CD8-positive, alpha-beta T cell (primary cell): ENCODE measurements at regions of chr2 and their contacts with region 1.

Region 1: GRCh38 chr2:196225213-196225612 is 53.8 kb upstream of the STK17B start:
- DNase-seq: no peak
- ATAC-seq: no peak
- H3K4me3 ChIP-seq: no peak overlapping the region
- H3K4me3 Mint-ChIP-seq: peak overlapping the region; percentile 8
- H3K27ac ChIP-seq: no peak overlapping the region
- H3K27ac Mint-ChIP-seq: peak overlapping the region; percentile 25
- H3K4me1 ChIP-seq: peaks cover 61% of the 10 kb centered on the region
- H3K4me1 Mint-ChIP-seq: peaks cover 78% of the 10 kb centered on the region
- H3K27me3 ChIP-seq: no peaks in the 10 kb centered on the region
- H3K27me3 Mint-ChIP-seq: no peaks in the 10 kb centered on the region
- CTCF ChIP-seq: no peak

Region 2: DNA sequence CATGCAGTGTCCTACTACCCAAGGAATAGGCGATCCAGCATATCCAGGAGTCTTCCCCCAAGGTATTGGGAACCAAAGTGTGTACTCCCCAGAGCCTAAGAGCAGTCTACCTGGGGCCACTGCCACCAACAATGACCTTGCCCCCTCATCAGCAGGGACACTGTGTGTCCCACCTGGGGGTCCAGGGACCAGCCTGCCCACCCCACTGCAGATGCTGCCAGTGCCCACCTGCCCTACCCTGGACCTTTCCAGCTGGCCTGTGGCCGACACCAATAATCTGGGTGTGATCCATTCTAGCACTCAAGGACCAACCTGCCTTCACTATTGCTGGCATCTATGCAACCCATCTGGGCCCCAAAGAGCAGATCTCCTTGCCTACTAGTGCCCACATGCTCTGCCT is 188.8 kb before region 1 on chr2:
- CTCF ChIA-PET with region 1: no interaction called
- POLR2A ChIA-PET with region 1: no interaction called
- intact Hi-C with region 1: no loop called
- DNase-seq: no peak
- ATAC-seq: no peak
- H3K4me3 ChIP-seq: no peak overlapping the region
- H3K4me3 Mint-ChIP-seq: no peak overlapping the region
- H3K27ac ChIP-seq: no peak overlapping the region
- H3K27ac Mint-ChIP-seq: no peak overlapping the region
- H3K4me1 ChIP-seq: no peaks in the 10 kb centered on the region
- H3K4me1 Mint-ChIP-seq: no peaks in the 10 kb centered on the region
- H3K27me3 ChIP-seq: no peaks in the 10 kb centered on the region
- H3K27me3 Mint-ChIP-seq: peaks cover 6% of the 10 kb centered on the region
- CTCF ChIP-seq: no peak

Region 3: GRCh38 chr2:196131384-196131937 is 93.8 kb before region 1 on chr2:
- CTCF ChIA-PET with region 1: interaction called, 14 read pairs
- POLR2A ChIA-PET with region 1: interaction called, 6 read pairs
- intact Hi-C with region 1: loop called in 1 of 2 experiments (anchors 1 kb)
- DNase-seq: peak in 8 of 9 experiments; percentile 43 to 78 (median 64)
- ATAC-seq: peak; percentile 24
- H3K4me3 ChIP-seq: no peak overlapping the region
- H3K4me3 Mint-ChIP-seq: no peak overlapping the region
- H3K27ac ChIP-seq: peak overlapping the region in 1 of 2 experiments; percentile 52
- H3K27ac Mint-ChIP-seq: peak overlapping the region; percentile 83
- H3K4me1 ChIP-seq: no peaks in the 10 kb centered on the region
- H3K4me1 Mint-ChIP-seq: peaks cover 31% of the 10 kb centered on the region
- H3K27me3 ChIP-seq: no peaks in the 10 kb centered on the region
- H3K27me3 Mint-ChIP-seq: no peaks in the 10 kb centered on the region
- CTCF ChIP-seq: peak; percentile 49

Region 4: DNA sequence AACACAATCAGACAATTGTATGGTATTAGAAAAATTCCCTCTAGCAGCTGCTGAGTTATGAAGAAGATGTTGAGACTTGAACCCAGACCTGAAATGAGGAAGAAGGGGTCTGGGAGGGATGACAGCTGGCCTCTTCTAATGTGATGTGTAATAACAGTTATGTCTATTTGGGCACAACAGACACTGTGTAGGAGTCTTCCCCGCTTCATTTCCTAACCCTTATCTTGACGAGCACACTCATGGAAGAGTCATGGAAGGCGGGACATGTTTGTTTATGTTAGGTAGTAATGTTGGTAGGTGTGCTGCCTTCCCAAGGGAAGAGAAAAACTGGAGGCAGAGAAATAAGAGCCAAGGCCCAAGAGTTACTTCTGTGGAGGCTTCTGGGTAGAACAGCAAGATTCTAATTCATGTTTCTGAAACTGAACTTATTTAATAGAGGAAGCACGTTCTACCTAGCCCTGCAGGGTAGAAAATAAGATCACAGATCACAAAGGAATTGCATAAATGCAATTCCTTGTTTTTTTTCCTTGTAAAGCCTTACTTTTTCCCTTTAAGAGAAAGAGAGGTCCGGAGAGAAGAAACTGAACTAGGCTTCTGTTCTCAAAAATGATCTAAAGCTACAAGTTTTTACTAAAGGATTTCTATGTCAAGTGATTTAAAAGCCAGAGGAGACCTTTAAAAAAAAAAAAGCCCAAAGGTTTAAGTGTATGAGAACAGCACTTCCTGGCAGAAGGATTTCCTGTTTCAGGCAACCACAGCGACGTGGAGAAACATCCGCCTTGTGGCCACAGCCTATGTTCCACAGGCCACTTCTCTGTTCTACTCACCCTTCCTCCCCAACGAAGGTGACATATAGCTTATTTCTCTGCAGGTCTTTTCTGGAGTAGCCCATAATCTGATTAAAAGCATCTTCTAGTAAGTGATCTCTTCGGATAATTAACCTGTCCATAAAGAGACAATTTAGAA is 14.7 kb after region 1 on chr2:
- CTCF ChIA-PET with region 1: interaction called, 36 read pairs
- POLR2A ChIA-PET with region 1: interaction called, 18 read pairs
- intact Hi-C with region 1: loop called in 1 of 2 experiments (anchors 1 kb)
- DNase-seq: peak; percentile 55 to 94 (median 81)
- ATAC-seq: peak; percentile 72
- H3K4me3 ChIP-seq: peak overlapping the region; percentile 7 to 21
- H3K4me3 Mint-ChIP-seq: peak overlapping the region; percentile 72
- H3K27ac ChIP-seq: peak overlapping the region; percentile 33 to 73
- H3K27ac Mint-ChIP-seq: peak overlapping the region; percentile 92
- H3K4me1 ChIP-seq: peaks cover 66% of the 10 kb centered on the region
- H3K4me1 Mint-ChIP-seq: peaks cover 74% of the 10 kb centered on the region
- H3K27me3 ChIP-seq: no peaks in the 10 kb centered on the region
- H3K27me3 Mint-ChIP-seq: no peaks in the 10 kb centered on the region
- CTCF ChIP-seq: peak; percentile 35

Region 5: DNA sequence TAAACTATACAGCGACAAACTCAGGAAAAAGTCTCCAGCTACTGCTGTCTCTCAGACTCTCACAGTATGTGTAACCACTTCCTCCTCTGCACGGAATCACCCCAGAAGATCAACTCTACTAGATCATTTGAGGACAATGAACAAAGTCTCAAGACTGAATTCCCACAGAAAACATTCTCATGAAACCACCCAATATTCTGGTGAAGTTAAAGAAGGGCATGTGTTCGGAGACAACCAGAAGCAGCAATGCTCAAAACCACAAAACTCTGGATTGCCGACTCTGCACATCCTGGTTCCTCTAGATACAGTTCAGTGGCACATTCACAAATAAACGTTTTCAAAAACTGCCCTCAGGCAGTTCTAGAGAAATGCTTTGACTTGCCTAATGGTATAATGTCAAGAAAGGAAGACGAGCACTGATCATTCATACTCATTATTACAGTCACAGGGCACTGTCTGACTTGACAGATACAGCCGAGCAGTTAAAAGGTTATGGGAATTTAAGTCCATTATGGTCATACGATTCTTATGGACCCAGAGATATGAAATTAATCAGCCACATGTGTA is 38.1 kb after region 1 on chr2:
- CTCF ChIA-PET with region 1: interaction called, 7 read pairs
- POLR2A ChIA-PET with region 1: interaction called, 3 read pairs
- intact Hi-C with region 1: loop called in 1 of 2 experiments (anchors 5 kb)
- DNase-seq: peak in 6 of 9 experiments; percentile 39 to 87 (median 58)
- ATAC-seq: peak; percentile 82
- H3K4me3 ChIP-seq: peak overlapping the region; percentile 3 to 12
- H3K4me3 Mint-ChIP-seq: peak overlapping the region; percentile 72
- H3K27ac ChIP-seq: peak overlapping the region; percentile 27 to 61
- H3K27ac Mint-ChIP-seq: peak overlapping the region; percentile 93
- H3K4me1 ChIP-seq: peaks cover 72% of the 10 kb centered on the region
- H3K4me1 Mint-ChIP-seq: peaks cover 78% of the 10 kb centered on the region
- H3K27me3 ChIP-seq: no peaks in the 10 kb centered on the region
- H3K27me3 Mint-ChIP-seq: no peaks in the 10 kb centered on the region
- CTCF ChIP-seq: no peak

Region 6: DNA sequence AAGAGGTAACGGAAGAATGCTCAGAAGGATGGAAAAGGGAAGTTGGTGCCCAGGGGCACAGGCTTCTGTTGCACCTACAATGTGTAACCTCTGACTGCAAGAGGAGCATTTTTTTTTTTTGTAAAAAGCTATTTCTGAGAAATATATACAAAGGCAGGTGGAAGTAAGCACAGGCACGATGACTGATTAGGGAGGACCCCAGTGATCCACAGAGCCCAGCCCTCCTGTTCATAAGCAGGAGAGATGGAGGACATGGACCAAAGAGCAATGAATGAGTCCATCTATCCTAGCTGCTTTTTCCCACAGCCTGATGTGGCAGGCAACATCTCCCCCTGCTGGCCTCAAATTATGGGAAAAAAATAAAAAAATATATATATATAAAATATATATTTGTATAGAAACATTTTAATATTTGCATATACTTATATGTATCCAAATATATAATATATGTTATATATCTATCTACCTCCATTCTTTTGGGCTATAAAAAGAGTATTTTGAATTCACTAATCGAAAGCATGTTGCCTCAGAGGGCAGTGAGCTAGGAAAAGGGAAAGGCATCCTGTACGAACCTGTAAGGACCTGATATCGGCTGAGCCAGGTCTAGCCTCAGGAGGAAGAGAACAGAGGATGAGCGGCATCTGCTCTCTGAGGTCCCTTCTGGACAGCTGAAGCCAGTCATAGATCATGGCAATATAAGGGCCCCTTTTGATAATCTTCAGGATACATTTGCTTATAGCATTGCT is 112.2 kb after region 1 on chr2:
- CTCF ChIA-PET with region 1: interaction called, 3 read pairs
- POLR2A ChIA-PET with region 1: no interaction called
- intact Hi-C with region 1: loop called in 1 of 2 experiments (anchors 5 kb)
- DNase-seq: peak in 4 of 9 experiments; percentile 13 to 58 (median 28)
- ATAC-seq: no peak
- H3K4me3 ChIP-seq: no peak overlapping the region
- H3K4me3 Mint-ChIP-seq: no peak overlapping the region
- H3K27ac ChIP-seq: no peak overlapping the region
- H3K27ac Mint-ChIP-seq: no peak overlapping the region
- H3K4me1 ChIP-seq: no peaks in the 10 kb centered on the region
- H3K4me1 Mint-ChIP-seq: peaks cover 3% of the 10 kb centered on the region
- H3K27me3 ChIP-seq: no peaks in the 10 kb centered on the region
- H3K27me3 Mint-ChIP-seq: peaks cover 3% of the 10 kb centered on the region
- CTCF ChIP-seq: peak; percentile 67